IMR-90 (cell line): ENCODE measurements at regions of chr2 and their contacts with region 1.

Region 1: GRCh38 chr2:47386551-47386950 is 16.4 kb upstream of the MSH2 start:
- DNase-seq: no peak
- ATAC-seq: no peak
- H3K4me3 ChIP-seq: no peak overlapping the region
- H3K27ac ChIP-seq: no peak overlapping the region
- H3K4me1 ChIP-seq: no peaks in the 10 kb centered on the region
- H3K27me3 ChIP-seq: no peaks in the 10 kb centered on the region; the same call in 1 of the 2 replicates
- CTCF ChIP-seq: no peak
- POLR2A ChIP-seq: no peak
- RAD21 ChIP-seq: no peak

Region 2: GRCh38 chr2:47218066-47218581 is 168.4 kb before region 1 on chr2:
- CTCF ChIA-PET with region 1: no interaction called
- POLR2A ChIA-PET with region 1: no interaction called
- dilution Hi-C with region 1: no loop called
- in situ Hi-C with region 1: no loop called
- intact Hi-C with region 1: no loop called
- DNase-seq: no peak
- ATAC-seq: no peak
- H3K4me3 ChIP-seq: no peak overlapping the region
- H3K27ac ChIP-seq: no peak overlapping the region
- H3K4me1 ChIP-seq: peaks cover 6% of the 10 kb centered on the region
- H3K27me3 ChIP-seq: no peaks in the 10 kb centered on the region
- CTCF ChIP-seq: no peak
- POLR2A ChIP-seq: no peak
- RAD21 ChIP-seq: no peak

Region 3: DNA sequence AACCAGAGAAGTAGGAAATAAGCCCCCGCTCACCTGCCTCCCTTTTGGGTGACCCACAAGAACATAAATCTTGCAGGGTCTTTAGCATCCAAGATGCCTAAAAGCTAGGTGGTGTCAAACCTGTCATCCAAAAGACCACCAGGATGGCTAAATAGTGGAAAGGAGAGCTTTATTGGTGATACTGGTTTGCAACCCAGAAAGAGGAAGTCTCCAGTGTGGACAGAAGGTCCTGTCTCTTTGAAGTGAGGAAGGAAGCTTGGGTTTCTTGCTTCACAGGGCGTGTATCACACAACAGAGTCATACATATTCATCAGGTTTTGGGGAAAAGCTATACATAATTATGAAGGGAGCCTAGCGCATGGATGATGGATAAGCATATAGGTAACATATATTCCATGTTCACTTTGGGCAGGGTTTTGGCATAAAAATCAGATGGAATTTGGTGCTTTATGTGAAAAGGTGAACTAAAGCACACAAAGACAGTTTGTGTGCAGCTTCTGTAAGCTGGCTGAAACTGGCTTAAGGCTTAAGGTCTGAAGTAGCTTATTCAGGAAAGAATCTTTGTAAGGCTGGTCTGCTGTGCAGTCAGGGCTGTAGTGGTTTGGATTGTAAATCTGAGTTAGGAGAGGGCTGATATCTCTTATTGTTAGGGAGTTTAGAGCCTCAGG is 85.8 kb before region 1 on chr2:
- CTCF ChIA-PET with region 1: no interaction called
- POLR2A ChIA-PET with region 1: no interaction called
- dilution Hi-C with region 1: no loop called
- in situ Hi-C with region 1: no loop called
- intact Hi-C with region 1: no loop called
- DNase-seq: no peak
- ATAC-seq: no peak
- H3K4me3 ChIP-seq: no peak overlapping the region
- H3K27ac ChIP-seq: no peak overlapping the region
- H3K4me1 ChIP-seq: peaks cover 3% of the 10 kb centered on the region
- H3K27me3 ChIP-seq: no peaks in the 10 kb centered on the region
- CTCF ChIP-seq: no peak
- POLR2A ChIP-seq: no peak
- RAD21 ChIP-seq: no peak

Region 4: GRCh38 chr2:47334356-47335136 is 52.0 kb before region 1 on chr2:
- CTCF ChIA-PET with region 1: interaction called, 46 read pairs
- POLR2A ChIA-PET with region 1: no interaction called
- dilution Hi-C with region 1: no loop called
- in situ Hi-C with region 1: loop called (anchors 5 kb)
- intact Hi-C with region 1: loop called (anchors 1 kb)
- DNase-seq: no peak
- ATAC-seq: no peak
- H3K4me3 ChIP-seq: no peak overlapping the region
- H3K27ac ChIP-seq: no peak overlapping the region
- H3K4me1 ChIP-seq: no peaks in the 10 kb centered on the region
- H3K27me3 ChIP-seq: peaks cover 8% of the 10 kb centered on the region
- CTCF ChIP-seq: no peak
- POLR2A ChIP-seq: no peak
- RAD21 ChIP-seq: no peak

Region 5: GRCh38 chr2:47339745-47340541 is 46.6 kb before region 1 on chr2:
- CTCF ChIA-PET with region 1: interaction called, 46 read pairs
- POLR2A ChIA-PET with region 1: no interaction called
- dilution Hi-C with region 1: no loop called
- in situ Hi-C with region 1: loop called (anchors 5 kb)
- intact Hi-C with region 1: loop called (anchors 1 kb)
- DNase-seq: peak; percentile 61
- ATAC-seq: peak; percentile 16; the same call in 1 of the 2 replicates
- H3K4me3 ChIP-seq: no peak overlapping the region
- H3K27ac ChIP-seq: no peak overlapping the region
- H3K4me1 ChIP-seq: no peaks in the 10 kb centered on the region
- H3K27me3 ChIP-seq: no peaks in the 10 kb centered on the region
- CTCF ChIP-seq: no peak
- POLR2A ChIP-seq: no peak
- RAD21 ChIP-seq: no peak

Region 6: GRCh38 chr2:47402805-47403608 is 16.5 kb after region 1 on chr2 and contains the start of gene MSH2:
- CTCF ChIA-PET with region 1: interaction called, 11 read pairs
- POLR2A ChIA-PET with region 1: interaction called, 9 read pairs
- dilution Hi-C with region 1: no loop called
- in situ Hi-C with region 1: no loop called
- intact Hi-C with region 1: no loop called
- DNase-seq: peak; percentile 89
- ATAC-seq: peak; percentile 98
- H3K4me3 ChIP-seq: peak within 1 kb of the TSS; percentile 68
- H3K27ac ChIP-seq: peak within 1 kb of the TSS; percentile 31
- H3K4me1 ChIP-seq: no peaks in the 10 kb centered on the region; the same call in 1 of the 2 replicates
- H3K27me3 ChIP-seq: no peaks in the 10 kb centered on the region
- CTCF ChIP-seq: no peak
- POLR2A ChIP-seq: no peak
- RAD21 ChIP-seq: no peak
- total RNA-seq, gene MSH2: 22.6 and 33.3 TPM in 2 replicates

Region 7: DNA sequence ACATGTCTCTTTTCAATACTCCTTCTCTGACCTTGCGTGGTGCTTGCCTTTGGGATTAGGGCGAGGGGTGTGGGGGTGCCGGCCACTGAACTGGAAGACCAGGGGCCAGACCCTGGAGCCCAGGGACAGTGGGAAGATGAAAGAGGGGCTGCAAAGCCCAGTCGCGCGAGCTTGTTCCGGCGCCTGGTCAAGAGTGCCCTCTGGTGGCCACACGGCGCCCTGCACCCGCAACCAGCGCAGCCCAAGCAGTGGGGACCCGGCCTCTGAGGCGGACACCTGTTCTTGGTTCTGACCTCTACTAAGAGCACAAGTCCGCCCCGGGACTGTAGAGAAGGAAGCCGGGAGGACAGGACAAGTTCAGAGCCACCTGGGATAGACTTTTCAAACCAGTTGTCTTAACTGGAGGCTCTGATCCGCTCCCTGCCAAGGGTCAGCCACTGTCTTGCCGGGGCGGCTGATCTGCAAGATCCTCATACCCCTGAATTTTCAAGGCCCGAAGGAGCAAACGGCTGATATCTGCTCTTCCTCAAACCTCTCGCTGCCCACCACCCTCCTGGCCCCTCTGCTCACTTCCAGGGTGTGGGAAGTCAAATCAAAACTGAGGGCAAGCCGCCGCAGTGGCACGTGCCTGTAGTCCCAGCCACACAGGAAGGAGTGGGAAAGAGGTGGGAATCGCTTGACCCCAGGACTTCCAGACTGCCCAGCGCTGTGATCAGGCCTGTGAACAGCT is 381.5 kb after region 1 on chr2:
- CTCF ChIA-PET with region 1: no interaction called
- POLR2A ChIA-PET with region 1: no interaction called
- dilution Hi-C with region 1: no loop called
- in situ Hi-C with region 1: no loop called
- intact Hi-C with region 1: loop called (anchors 1 kb)
- DNase-seq: peak; percentile 30
- ATAC-seq: peak; percentile 91
- H3K4me3 ChIP-seq: peak overlapping the region; percentile 49; the same call in 1 of the 2 replicates
- H3K27ac ChIP-seq: no peak overlapping the region
- H3K4me1 ChIP-seq: peaks cover 2% of the 10 kb centered on the region; the same call in 1 of the 2 replicates
- H3K27me3 ChIP-seq: peaks cover 8% of the 10 kb centered on the region; the same call in 1 of the 2 replicates
- CTCF ChIP-seq: peak; percentile 92
- POLR2A ChIP-seq: 0 out of 2 replicates have a peak, but pooled peaks have one; percentile 29
- RAD21 ChIP-seq: peak; percentile 95